ENCODE measurements at regions of chr15 and their contacts with region 1.

Region 1: DNA sequence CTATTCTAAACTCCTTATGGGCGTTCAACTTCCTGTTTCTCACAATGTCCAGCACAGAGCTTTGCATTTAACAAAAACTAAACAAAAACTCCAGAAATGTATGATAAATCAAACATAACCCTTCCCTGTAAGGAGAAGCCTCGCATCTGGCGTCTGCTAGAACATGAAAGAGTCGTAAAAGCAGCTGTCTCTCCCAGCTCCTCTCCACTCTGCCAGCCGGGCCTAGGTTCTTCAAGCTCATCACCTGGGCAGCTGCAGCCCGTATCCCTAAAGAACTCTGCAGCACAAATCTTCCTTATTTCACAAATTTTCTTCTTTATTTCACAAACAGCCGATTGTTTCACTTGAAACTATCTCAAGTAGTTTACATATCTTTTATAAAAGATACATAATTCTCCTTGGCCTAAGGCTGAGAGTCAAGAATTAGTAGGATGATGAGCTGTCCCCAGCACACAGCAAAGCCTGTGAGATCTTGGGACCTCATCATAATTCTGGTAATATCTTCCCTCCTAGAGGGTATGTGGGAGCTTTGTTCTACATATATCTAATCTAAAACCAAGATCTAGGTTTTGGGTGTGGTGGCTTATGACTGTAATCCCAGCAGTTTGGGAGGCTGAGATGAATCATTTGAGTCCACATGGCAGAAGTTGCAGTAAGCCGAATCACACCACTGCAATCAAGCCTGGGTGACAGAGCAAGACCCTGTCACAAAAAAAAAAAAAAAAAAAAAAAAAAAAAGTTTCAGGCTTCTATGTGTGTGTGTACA is 35.3 kb downstream of the ANXA2 start:
- DNase-seq: peak; percentile 61
- H3K4me3 Mint-ChIP-seq: no peak overlapping the region
- H3K27ac Mint-ChIP-seq: no peak overlapping the region
- H3K4me1 Mint-ChIP-seq: peaks cover 12% of the 10 kb centered on the region
- H3K27me3 Mint-ChIP-seq: no peaks in the 10 kb centered on the region

Region 2: GRCh38 chr15:60272625-60273024 is 89.9 kb before region 1 on chr15:
- CTCF ChIA-PET with region 1: no interaction called
- intact Hi-C with region 1: no loop called
- DNase-seq: no peak
- H3K4me3 Mint-ChIP-seq: no peak overlapping the region
- H3K27ac Mint-ChIP-seq: no peak overlapping the region
- H3K4me1 Mint-ChIP-seq: no peaks in the 10 kb centered on the region
- H3K27me3 Mint-ChIP-seq: peaks cover 20% of the 10 kb centered on the region

Region 3: DNA sequence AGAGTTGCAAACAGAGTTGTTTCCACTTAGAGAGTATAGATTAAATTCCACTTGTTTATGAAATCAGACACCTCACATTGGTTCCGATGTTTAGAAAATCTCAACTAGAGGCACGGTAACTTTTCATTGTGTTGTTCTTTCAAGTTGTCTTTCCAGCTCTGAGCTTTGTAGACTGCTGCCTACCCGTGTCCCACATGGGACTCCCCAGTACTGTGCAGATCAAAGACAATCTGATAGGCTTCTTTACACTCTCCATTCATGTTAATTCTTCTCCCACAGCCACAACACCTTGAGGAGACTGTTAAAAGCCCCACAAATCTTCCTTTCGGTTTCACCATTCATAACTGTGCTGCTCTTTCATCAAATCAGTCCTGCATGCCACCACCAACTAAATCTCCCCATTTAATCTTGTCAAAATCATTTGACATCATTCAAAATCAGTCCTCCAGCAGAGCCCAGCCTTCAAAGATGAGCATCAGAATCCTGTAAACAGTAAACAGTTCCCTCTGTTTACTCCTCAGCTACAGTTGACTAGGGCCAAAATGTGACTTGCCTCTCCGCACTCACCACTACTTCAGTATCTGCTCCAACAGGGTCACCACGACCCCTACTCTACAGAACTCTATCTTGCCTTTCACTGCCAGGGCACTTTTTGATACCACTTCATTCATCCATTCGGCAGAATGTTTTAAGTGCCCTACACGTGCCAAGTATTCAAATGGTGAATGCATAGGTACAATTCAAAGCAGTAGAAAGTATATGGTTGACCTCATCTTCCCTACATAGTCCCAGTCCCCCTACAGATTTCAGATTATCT is 27.0 kb after region 1 on chr15:
- CTCF ChIA-PET with region 1: no interaction called
- intact Hi-C with region 1: loop called (anchors 2 kb)
- DNase-seq: peak; percentile 60
- H3K4me3 Mint-ChIP-seq: peak overlapping the region; percentile 13
- H3K27ac Mint-ChIP-seq: no peak overlapping the region
- H3K4me1 Mint-ChIP-seq: peaks cover 23% of the 10 kb centered on the region
- H3K27me3 Mint-ChIP-seq: peaks cover 6% of the 10 kb centered on the region

Region 4: GRCh38 chr15:60421544-60421943 is 59.0 kb after region 1 on chr15:
- CTCF ChIA-PET with region 1: interaction called, 10 read pairs
- intact Hi-C with region 1: no loop called
- DNase-seq: no peak
- H3K4me3 Mint-ChIP-seq: no peak overlapping the region
- H3K27ac Mint-ChIP-seq: no peak overlapping the region
- H3K4me1 Mint-ChIP-seq: peaks cover 8% of the 10 kb centered on the region
- H3K27me3 Mint-ChIP-seq: no peaks in the 10 kb centered on the region

Region 5: DNA sequence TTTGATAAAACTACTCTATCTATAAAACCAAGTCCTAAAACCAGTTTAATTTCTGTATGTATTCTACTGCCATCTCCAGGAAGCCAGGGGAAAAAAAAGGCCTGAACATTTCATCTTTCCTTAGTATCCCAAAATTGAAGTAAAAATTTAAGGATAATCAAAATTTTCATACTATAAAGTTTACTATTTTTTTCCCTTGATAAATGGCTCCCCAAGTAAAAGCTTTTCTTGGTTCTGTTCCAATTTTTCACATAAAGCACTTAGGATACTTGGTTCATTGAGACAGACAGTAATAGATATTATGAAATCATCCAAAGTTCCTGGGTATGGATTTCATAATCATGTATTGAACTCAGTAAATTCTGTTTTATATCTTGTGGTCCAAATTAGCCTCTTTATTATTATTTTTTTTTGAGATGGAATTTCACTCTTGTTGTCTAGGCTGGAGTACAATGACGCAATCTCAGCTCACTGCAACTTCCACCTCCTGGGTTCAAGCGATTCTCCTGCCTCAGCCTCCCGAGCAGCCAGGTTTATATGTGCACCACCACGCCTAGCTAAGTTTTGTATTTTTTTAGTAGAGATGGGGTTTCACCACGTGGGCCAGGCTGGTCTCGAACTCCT is 81.9 kb after region 1 on chr15:
- CTCF ChIA-PET with region 1: interaction called, 29 read pairs
- intact Hi-C with region 1: loop called (anchors 2 kb)
- DNase-seq: no peak
- H3K4me3 Mint-ChIP-seq: no peak overlapping the region
- H3K27ac Mint-ChIP-seq: no peak overlapping the region
- H3K4me1 Mint-ChIP-seq: no peaks in the 10 kb centered on the region
- H3K27me3 Mint-ChIP-seq: no peaks in the 10 kb centered on the region

Region 6: GRCh38 chr15:60932051-60932915 is 569.8 kb after region 1 on chr15:
- CTCF ChIA-PET with region 1: interaction called, 13 read pairs
- intact Hi-C with region 1: loop called (anchors 2 kb)
- DNase-seq: peak; percentile 71
- H3K4me3 Mint-ChIP-seq: no peak overlapping the region
- H3K27ac Mint-ChIP-seq: no peak overlapping the region
- H3K4me1 Mint-ChIP-seq: peaks cover 12% of the 10 kb centered on the region
- H3K27me3 Mint-ChIP-seq: peaks cover 10% of the 10 kb centered on the region

Region 7: GRCh38 chr15:61051569-61052031 is 689.1 kb after region 1 on chr15:
- CTCF ChIA-PET with region 1: no interaction called
- intact Hi-C with region 1: loop called (anchors 10 kb)
- DNase-seq: peak; percentile 14
- H3K4me3 Mint-ChIP-seq: no peak overlapping the region
- H3K27ac Mint-ChIP-seq: no peak overlapping the region
- H3K4me1 Mint-ChIP-seq: no peaks in the 10 kb centered on the region
- H3K27me3 Mint-ChIP-seq: peaks cover 5% of the 10 kb centered on the region

Region 8: GRCh38 chr15:61834076-61834697 is 1471.7 kb after region 1 on chr15:
- CTCF ChIA-PET with region 1: no interaction called
- intact Hi-C with region 1: loop called (anchors 5 kb)
- DNase-seq: peak; percentile 83
- H3K4me3 Mint-ChIP-seq: no peak overlapping the region
- H3K27ac Mint-ChIP-seq: no peak overlapping the region
- H3K4me1 Mint-ChIP-seq: no peaks in the 10 kb centered on the region
- H3K27me3 Mint-ChIP-seq: peaks cover 18% of the 10 kb centered on the region